Mammary epithelial cell (primary cell): ENCODE measurements at regions of chr5 and their contacts with region 1.

Region 1: GRCh38 chr5:31809050-31809870 is 170.3 kb downstream of the PDZD2 start:
- DNase-seq: peak; percentile 59
- H3K4me3 ChIP-seq: no peak overlapping the region
- H3K27ac ChIP-seq: no peak overlapping the region
- H3K4me1 ChIP-seq: peaks cover 7% of the 10 kb centered on the region
- H3K27me3 ChIP-seq: peaks cover 2% of the 10 kb centered on the region
- CTCF ChIP-seq: peak; percentile 76 to 85

Region 2: GRCh38 chr5:31531888-31532710 is 277.2 kb before region 1 on chr5 and contains the starts of genes C5orf22 and DROSHA:
- CTCF ChIA-PET with region 1: interaction called, 3 read pairs
- dilution Hi-C with region 1: no loop called
- in situ Hi-C with region 1: no loop called
- intact Hi-C with region 1: loop called (anchors 2 kb)
- DNase-seq: peak; percentile 97
- H3K4me3 ChIP-seq: peak within 1 kb of the TSS; percentile 85 to 99 (median 98)
- H3K27ac ChIP-seq: peak within 1 kb of the TSS; percentile 77
- H3K4me1 ChIP-seq: peaks cover 25% of the 10 kb centered on the region
- H3K27me3 ChIP-seq: no peaks in the 10 kb centered on the region
- CTCF ChIP-seq: no peak
- total RNA-seq, gene C5orf22: 23.8 to 34.5 TPM
- total RNA-seq, gene DROSHA: 44.5 to 68.1 TPM

Region 3: DNA sequence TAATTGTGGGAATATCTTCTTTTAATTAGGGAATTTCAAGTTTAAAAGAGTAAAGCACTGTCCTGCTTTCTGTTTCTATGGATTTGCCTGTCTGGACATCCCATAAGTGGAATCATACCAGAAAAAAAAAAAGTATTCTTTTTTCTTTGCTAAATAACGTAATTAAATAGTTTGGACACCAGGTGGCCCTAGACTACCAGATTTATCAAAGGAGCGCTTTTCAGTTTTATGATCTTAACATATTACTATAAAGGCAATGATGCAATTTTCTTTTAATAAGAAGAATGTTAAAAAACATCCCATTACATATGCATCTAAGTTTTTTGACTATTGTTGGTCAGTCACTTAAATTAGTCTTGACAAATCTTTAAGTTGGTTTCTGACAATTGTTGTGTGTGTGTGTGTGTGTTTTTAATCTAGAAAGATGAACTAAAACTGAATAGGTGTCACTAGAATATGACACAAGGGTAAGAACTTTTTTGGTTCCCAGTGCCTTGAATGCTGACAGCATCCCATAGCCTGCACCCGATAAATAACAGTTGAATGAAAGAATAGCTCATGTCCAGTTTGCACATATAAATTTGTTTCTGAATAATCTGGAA is 227.7 kb before region 1 on chr5:
- CTCF ChIA-PET with region 1: interaction called, 5 read pairs
- dilution Hi-C with region 1: no loop called
- in situ Hi-C with region 1: loop called in 1 of 2 experiments (anchors 5 kb)
- intact Hi-C with region 1: loop called (anchors 1 kb)
- DNase-seq: peak; percentile 14
- H3K4me3 ChIP-seq: no peak overlapping the region
- H3K27ac ChIP-seq: no peak overlapping the region
- H3K4me1 ChIP-seq: no peaks in the 10 kb centered on the region
- H3K27me3 ChIP-seq: no peaks in the 10 kb centered on the region
- CTCF ChIP-seq: peak; percentile 24 to 51

Region 4: DNA sequence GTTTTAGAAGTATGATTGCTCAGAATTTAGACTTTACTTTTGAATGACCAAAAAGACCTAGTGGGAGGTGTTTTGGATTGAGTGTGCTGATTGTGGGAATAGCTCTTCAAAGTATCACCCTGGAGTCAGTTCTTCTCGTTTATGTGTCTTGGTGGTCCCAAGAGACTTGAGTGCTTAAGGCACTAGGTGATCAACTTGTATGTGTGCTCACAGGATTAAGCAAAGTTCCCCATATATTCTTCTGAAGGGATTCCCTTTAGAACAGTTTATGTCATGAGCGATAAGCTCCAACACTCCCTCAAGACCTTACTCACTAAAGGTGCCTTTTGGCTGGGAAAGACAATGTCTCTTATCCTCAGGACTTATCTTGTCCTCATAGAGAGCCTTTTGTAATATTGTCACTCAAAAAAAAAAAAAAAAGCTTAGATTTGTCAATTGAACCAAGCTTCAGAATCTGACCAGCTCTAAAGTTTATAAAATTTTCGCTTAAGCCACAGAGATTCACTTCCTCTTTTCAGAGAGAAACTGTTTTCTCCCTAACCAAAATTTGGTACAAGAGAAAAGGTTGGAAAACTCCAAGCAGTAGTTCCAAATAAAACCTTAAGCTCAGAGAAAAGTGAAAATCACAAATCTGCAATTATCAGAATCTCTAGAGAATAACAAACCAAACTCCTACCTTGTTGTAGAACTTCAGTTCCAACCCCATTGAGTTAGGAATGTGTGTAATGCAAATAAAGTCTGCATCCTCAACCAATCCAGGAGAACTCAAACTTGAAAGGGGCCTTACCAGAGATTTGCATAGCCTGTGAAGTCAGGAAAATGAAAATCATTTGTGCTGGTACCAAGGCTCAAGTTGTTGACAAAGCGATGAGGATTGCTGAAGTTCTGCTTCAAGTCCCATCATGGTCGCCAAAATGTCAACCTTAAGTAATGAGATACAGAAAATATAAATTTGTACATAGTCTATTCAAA is 210.3 kb before region 1 on chr5:
- CTCF ChIA-PET with region 1: no interaction called
- dilution Hi-C with region 1: no loop called
- in situ Hi-C with region 1: loop called in 1 of 2 experiments (anchors 10 kb)
- intact Hi-C with region 1: no loop called
- DNase-seq: no peak
- H3K4me3 ChIP-seq: no peak overlapping the region
- H3K27ac ChIP-seq: no peak overlapping the region
- H3K4me1 ChIP-seq: no peaks in the 10 kb centered on the region
- H3K27me3 ChIP-seq: peaks cover 2% of the 10 kb centered on the region
- CTCF ChIP-seq: no peak

Region 5: GRCh38 chr5:31664566-31664965 is 144.7 kb before region 1 on chr5:
- CTCF ChIA-PET with region 1: interaction called, 4 read pairs
- dilution Hi-C with region 1: no loop called
- in situ Hi-C with region 1: no loop called
- intact Hi-C with region 1: loop called (anchors 1 kb)
- DNase-seq: peak; percentile 41
- H3K4me3 ChIP-seq: no peak overlapping the region
- H3K27ac ChIP-seq: no peak overlapping the region
- H3K4me1 ChIP-seq: no peaks in the 10 kb centered on the region
- H3K27me3 ChIP-seq: no peaks in the 10 kb centered on the region
- CTCF ChIP-seq: peak in 1 of 2 donors; percentile 16

Region 6: DNA sequence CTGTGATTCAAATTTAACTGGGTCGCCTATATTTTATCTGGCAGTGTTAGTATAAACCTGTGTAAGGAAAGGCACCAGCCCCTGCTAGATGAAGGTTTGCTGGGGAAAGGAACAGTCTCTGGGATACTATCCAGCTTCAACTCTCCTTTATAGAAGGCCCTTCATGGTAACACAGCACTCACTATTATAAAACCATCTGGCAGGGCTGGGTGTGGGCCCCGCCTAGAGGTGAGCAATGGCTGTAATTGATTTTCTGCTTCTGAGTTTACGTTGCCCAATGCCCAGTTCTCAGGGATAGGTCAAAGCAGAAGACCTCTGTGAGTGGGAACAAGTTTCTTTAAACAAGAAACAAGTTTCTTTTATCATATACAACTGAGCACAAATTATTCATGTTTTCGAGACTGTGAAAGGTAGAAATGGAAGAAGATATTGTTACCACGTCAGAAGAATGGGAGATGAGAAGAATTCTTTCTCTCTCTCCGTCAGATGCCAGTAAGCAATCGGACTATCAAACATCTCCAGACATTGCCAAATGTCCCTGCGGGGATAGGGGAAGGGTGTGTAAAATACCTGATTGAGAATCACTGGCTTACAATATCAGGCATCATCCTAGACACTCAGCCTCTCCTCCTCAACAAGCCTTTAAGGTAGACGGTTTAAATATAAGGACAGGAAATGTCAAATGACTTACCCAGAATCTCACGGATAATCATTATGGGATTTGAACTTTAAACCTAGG is 35.5 kb after region 1 on chr5:
- CTCF ChIA-PET with region 1: interaction called, 15 read pairs
- dilution Hi-C with region 1: no loop called
- in situ Hi-C with region 1: no loop called
- intact Hi-C with region 1: no loop called
- DNase-seq: peak; percentile 51
- H3K4me3 ChIP-seq: no peak overlapping the region
- H3K27ac ChIP-seq: no peak overlapping the region
- H3K4me1 ChIP-seq: no peaks in the 10 kb centered on the region
- H3K27me3 ChIP-seq: peaks cover 2% of the 10 kb centered on the region
- CTCF ChIP-seq: no peak

Region 7: DNA sequence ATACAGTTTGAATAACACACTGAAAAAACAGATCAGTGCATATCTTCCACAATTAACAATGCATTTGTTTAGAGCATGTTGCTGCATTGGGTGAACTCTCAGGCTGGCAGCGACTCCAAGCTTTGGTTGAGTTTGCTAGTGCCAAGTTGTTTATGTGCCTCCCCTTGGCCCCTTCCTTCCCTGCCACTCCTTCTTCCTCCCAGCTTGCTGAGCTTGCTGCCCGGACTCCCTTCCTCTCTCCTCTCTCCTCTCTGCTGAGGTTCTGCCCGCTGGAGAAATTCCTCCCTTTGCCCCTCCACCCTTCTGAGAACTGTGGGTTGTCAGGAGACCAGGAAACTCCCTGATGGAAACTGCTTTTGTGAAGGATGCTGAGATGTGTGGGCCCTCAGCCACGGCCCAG is 76.9 kb after region 1 on chr5:
- CTCF ChIA-PET with region 1: no interaction called
- dilution Hi-C with region 1: no loop called
- in situ Hi-C with region 1: no loop called
- intact Hi-C with region 1: no loop called
- DNase-seq: no peak
- H3K4me3 ChIP-seq: no peak overlapping the region
- H3K27ac ChIP-seq: no peak overlapping the region
- H3K4me1 ChIP-seq: peaks cover 3% of the 10 kb centered on the region
- H3K27me3 ChIP-seq: no peaks in the 10 kb centered on the region
- CTCF ChIP-seq: no peak